BJ (cell line): ENCODE measurements at regions of chr17 and their contacts with region 1.

Region 1: GRCh38 chr17:57772774-57773173 is 27.7 kb upstream of the CCDC182 start:
- DNase-seq: no peak
- H3K4me3 ChIP-seq: no peak overlapping the region
- H3K27me3 ChIP-seq: peaks cover 13% of the 10 kb centered on the region; the same call in 1 of the 2 replicates
- CTCF ChIP-seq: no peak

Region 2: GRCh38 chr17:57783106-57783742 is 10.4 kb after region 1 on chr17:
- CTCF ChIA-PET with region 1: interaction called, 11 read pairs
- POLR2A ChIA-PET with region 1: no interaction called
- DNase-seq: no peak
- H3K4me3 ChIP-seq: no peak overlapping the region
- H3K27me3 ChIP-seq: peaks cover 10% of the 10 kb centered on the region
- CTCF ChIP-seq: peak; percentile 75

Region 3: DNA sequence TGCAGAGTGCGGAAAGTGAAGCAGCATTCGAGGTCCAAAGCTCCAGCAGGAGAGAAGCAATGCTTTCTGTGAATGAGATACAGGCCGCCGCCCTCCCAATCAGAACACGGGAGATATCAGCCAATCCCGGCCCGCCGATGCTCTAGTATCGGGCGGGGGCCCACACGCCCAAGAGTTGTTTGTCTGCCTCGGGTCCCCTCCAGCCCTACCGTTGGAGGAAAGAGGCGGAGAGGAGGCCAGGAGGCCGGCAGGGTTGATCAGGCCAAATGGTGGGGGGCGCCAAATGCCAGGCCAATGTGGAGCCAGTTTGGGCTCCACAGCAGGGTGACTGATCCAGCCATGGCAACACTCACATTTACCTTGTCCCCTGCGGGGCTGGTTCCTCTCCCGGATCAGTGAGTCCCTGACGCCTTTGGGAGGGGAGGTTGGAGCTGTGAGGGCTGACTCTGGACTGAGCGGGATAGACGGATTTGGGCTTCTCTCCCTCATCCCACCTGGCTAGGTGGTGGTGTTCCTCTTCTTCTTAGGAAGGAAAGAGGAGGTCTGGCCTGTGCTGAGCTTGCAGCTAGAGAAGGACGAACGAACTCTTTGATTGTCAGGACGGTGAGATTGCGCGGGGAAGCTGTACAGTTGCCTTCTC is 192.9 kb after region 1 on chr17:
- CTCF ChIA-PET with region 1: no interaction called
- POLR2A ChIA-PET with region 1: no interaction called
- DNase-seq: no peak
- H3K4me3 ChIP-seq: no peak overlapping the region
- H3K27me3 ChIP-seq: no peaks in the 10 kb centered on the region
- CTCF ChIP-seq: no peak